ENCODE measurements at regions of chr18 and their contacts with region 1.

Region 1: GRCh38 chr18:13800505-13801259 is 23.3 kb upstream of the MC5R start:
- DNase-seq: peak; percentile 81
- H3K4me3 ChIP-seq: peak overlapping the region; percentile 34 to 42 (median 38)
- H3K27ac ChIP-seq: no peak overlapping the region
- H3K4me1 ChIP-seq: peaks cover 18% of the 10 kb centered on the region
- H3K27me3 ChIP-seq: no peaks in the 10 kb centered on the region
- CTCF ChIP-seq: peak; percentile 39 to 79

Region 2: DNA sequence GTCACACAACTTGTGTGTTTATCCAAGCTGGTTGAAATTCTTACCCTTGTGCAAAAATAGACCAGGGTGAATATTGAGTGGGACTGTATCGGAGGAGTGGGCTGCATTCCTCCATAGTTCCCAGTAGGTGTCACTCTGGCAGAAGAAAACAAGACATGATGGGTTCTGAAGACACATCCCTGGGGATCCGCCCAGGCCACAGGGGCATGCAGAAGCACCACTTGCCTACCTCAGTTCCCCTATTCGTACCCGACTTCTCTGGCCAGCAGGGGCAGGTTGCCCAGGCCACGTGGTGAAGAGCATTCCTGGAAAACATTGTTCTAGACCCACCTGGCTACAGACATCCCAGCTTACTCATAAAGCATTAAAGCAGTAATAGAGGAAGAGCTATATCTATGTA is 242.6 kb before region 1 on chr18:
- CTCF ChIA-PET with region 1: no interaction called
- dilution Hi-C with region 1: no loop called
- in situ Hi-C with region 1: loop called in 1 of 2 experiments (anchors 25 kb)
- intact Hi-C with region 1: loop called (anchors 1 kb)
- DNase-seq: peak; percentile 29
- H3K4me3 ChIP-seq: no peak overlapping the region
- H3K27ac ChIP-seq: no peak overlapping the region
- H3K4me1 ChIP-seq: no peaks in the 10 kb centered on the region
- H3K27me3 ChIP-seq: no peaks in the 10 kb centered on the region
- CTCF ChIP-seq: peak; percentile 67 to 70

Region 3: DNA sequence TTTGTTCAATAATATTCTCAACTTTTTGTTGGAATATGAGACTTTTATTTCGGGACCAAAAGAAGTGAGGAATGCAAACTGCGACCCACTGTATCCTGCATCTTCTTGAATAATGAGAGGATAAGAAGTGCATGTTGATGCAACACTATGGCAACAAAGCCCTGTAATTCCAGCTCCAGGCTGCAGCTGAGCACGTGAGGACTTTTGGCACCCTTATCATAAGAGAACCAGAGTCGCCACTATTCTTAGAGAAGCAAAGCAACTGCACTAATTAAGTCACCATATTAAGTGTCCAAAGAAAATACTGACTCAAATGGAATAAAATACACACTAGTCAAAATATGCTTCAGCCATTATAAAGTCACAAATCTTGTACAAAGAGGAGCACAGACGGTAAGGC is 140.2 kb before region 1 on chr18:
- CTCF ChIA-PET with region 1: no interaction called
- dilution Hi-C with region 1: no loop called
- in situ Hi-C with region 1: no loop called
- intact Hi-C with region 1: loop called (anchors 1 kb)
- DNase-seq: no peak
- H3K4me3 ChIP-seq: no peak overlapping the region
- H3K27ac ChIP-seq: no peak overlapping the region
- H3K4me1 ChIP-seq: no peaks in the 10 kb centered on the region
- H3K27me3 ChIP-seq: no peaks in the 10 kb centered on the region
- CTCF ChIP-seq: no peak

Region 4: DNA sequence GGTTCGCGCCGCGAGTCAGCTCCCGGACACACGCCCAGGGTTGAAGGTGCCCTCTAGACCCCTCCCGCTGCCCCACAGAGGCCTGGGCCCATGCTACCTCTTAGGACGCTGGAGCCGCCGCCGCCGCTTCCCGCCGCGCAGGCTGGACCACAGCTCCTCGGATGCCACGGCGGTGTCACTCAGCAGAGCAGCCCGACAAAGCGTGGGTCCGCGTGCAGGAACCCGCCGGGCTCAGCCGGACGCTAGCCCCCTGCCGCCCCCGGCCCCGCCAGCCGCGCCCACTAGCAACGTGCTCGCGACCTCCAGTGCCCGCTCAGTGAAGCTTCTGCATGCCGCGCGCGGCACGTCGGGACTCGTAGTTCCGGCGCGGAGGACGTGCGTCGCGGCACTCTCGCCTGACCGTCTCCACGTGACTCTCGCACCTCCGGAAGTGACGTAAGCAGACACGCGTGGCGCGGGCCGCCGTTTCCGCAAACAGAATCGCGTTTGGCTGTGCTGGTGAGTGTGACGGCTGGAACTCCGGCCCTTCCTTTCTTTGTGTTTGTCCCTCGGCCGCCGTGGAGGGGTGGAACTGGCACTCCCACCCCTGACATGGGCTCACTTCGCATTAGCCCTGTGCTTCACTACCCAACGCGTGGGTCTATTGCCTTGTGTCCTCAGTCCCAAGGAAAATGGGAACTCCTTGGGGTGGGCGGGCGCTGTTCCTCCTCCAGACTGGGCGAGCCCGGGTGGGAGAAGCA is 74.3 kb before region 1 on chr18 and contains the starts of genes FAM210A and RNMT:
- CTCF ChIA-PET with region 1: no interaction called
- dilution Hi-C with region 1: no loop called
- in situ Hi-C with region 1: no loop called
- intact Hi-C with region 1: loop called (anchors 1 kb)
- DNase-seq: peak; percentile 95
- H3K4me3 ChIP-seq: peak within 1 kb of the TSS; percentile 91 to 98 (median 92)
- H3K27ac ChIP-seq: peak within 1 kb of the TSS; percentile 97
- H3K4me1 ChIP-seq: peaks cover 11% of the 10 kb centered on the region
- H3K27me3 ChIP-seq: no peaks in the 10 kb centered on the region
- CTCF ChIP-seq: peak in 1 of 2 donors; percentile 18
- total RNA-seq, gene FAM210A: 37.8 to 40.2 TPM
- total RNA-seq, gene RNMT: 32.8 to 37.6 TPM

Measured in mammary epithelial cell (primary cell).